Activated naive CD4-positive, alpha-beta T cell treated with anti-CD3 and anti-CD28 coated beads for 36 hours (primary cell): ENCODE measurements at regions of chr5 and their contacts with region 1.

Region 1: GRCh38 chr5:10441083-10441991 is at the start of gene ROPN1L:
- DNase-seq: peak; percentile 74
- H3K4me3 Mint-ChIP-seq: peak within 1 kb of the TSS; percentile 74
- H3K27ac Mint-ChIP-seq: no peak within 1 kb of the TSS
- H3K4me1 Mint-ChIP-seq: peaks cover 32% of the 10 kb centered on the region
- H3K27me3 Mint-ChIP-seq: peaks cover 2% of the 10 kb centered on the region
- total RNA-seq, gene ROPN1L: not detected

Region 2: DNA sequence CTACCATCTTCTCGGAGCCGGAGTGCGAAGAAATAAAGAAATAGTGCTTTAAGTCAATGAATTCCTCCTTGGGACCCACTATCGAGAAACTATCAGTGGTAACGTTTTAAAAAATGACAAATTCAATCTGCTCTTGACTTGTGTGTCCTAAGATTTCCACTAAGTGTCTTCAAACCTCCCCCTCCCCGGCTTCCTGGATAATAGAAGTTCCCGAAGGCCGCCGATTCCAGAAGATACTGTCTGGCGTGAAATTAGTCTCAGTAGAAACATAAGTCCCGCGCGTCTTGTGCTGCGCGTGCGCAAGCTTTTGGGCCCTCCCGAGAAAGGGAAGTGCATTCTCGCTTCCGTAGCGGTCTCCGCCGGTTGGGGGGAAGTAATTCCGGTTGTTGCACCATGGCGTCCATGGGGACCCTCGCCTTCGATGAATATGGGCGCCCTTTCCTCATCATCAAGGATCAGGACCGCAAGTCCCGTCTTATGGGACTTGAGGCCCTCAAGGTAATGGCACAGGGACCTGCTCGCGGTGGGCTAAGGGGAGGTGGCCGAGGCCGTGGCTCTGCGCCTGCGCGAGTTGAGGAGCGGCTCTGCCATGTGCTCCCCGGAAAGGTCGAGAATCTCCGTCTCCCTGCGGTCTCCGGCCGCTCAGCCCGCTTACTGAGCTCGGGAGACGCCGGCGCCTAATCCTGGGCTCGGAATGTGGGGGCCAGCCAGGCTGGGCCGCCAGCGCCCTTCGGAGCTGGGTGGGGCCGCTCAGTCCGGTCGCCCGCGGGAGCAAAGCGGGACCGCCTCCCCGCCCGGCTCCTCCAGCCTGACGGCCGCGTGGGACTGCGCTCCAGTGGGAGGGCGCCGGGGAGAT is 191.2 kb before region 1 on chr5 and contains the start of gene CCT5:
- CTCF ChIA-PET with region 1: no interaction called
- intact Hi-C with region 1: loop called (anchors 1 kb)
- DNase-seq: peak; percentile 93
- H3K4me3 Mint-ChIP-seq: peak within 1 kb of the TSS; percentile 86
- H3K27ac Mint-ChIP-seq: peak within 1 kb of the TSS; percentile 99
- H3K4me1 Mint-ChIP-seq: peaks cover 47% of the 10 kb centered on the region
- H3K27me3 Mint-ChIP-seq: no peaks in the 10 kb centered on the region
- total RNA-seq, gene CCT5: 414 to 419 TPM

Region 3: GRCh38 chr5:10353241-10354047 is 87.9 kb before region 1 on chr5 and contains the start of gene MARCHF6:
- CTCF ChIA-PET with region 1: no interaction called
- intact Hi-C with region 1: loop called (anchors 1 kb)
- DNase-seq: peak; percentile 96
- H3K4me3 Mint-ChIP-seq: peak within 1 kb of the TSS; percentile 99
- H3K27ac Mint-ChIP-seq: peak within 1 kb of the TSS; percentile 98
- H3K4me1 Mint-ChIP-seq: peaks cover 39% of the 10 kb centered on the region
- H3K27me3 Mint-ChIP-seq: no peaks in the 10 kb centered on the region
- total RNA-seq, gene MARCHF6: 72.5 to 76.8 TPM

Region 4: GRCh38 chr5:10452768-10453331 is 11.5 kb after region 1 on chr5:
- CTCF ChIA-PET with region 1: interaction called, 19 read pairs
- intact Hi-C with region 1: no loop called
- DNase-seq: peak; percentile 22
- H3K4me3 Mint-ChIP-seq: no peak overlapping the region
- H3K27ac Mint-ChIP-seq: no peak overlapping the region
- H3K4me1 Mint-ChIP-seq: peaks cover 1% of the 10 kb centered on the region
- H3K27me3 Mint-ChIP-seq: no peaks in the 10 kb centered on the region

Region 5: DNA sequence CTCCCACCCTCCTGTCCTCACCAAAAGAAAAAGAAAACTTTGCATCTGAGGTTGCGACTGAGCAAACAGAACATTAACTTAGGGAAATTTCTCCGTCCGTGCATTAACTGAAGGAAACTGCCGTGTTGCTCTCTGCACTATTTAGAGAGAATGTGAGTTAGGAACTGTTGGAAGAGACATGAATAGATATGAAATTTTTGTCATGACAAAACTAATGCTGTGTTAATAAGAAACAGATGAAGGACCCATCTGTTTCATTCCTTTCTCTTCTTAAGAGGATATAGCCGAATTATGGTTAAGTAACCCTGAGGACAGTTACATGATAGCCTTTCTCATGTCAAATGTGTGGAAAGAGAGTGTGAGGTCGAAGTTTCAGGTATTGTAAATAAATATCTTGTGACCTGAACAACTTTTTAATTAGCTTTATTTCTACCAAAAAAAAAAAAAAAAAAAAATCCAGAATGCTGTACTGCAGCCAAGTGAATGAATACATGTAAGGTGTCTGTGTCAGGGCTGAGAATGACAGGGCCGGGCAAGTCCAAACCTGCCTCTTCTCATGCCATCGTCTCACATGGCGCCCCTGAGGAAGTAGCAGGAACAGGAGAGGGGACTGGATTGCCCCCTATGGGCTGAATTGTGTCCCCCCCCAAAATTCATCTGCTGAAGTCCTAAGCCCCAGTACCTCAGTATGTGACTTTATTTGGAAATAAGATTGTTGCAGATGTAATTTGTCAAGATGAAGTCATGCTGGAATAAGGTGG is 86.9 kb after region 1 on chr5:
- CTCF ChIA-PET with region 1: no interaction called
- intact Hi-C with region 1: no loop called
- DNase-seq: no peak
- H3K4me3 Mint-ChIP-seq: no peak overlapping the region
- H3K27ac Mint-ChIP-seq: no peak overlapping the region
- H3K4me1 Mint-ChIP-seq: peaks cover 2% of the 10 kb centered on the region
- H3K27me3 Mint-ChIP-seq: peaks cover 10% of the 10 kb centered on the region

Region 6: GRCh38 chr5:10627160-10627701 is 185.9 kb after region 1 on chr5:
- CTCF ChIA-PET with region 1: interaction called, 11 read pairs
- intact Hi-C with region 1: loop called (anchors 5 kb)
- DNase-seq: peak; percentile 38
- H3K4me3 Mint-ChIP-seq: peak overlapping the region; percentile 76
- H3K27ac Mint-ChIP-seq: no peak overlapping the region
- H3K4me1 Mint-ChIP-seq: peaks cover 26% of the 10 kb centered on the region
- H3K27me3 Mint-ChIP-seq: peaks cover 6% of the 10 kb centered on the region

Region 7: DNA sequence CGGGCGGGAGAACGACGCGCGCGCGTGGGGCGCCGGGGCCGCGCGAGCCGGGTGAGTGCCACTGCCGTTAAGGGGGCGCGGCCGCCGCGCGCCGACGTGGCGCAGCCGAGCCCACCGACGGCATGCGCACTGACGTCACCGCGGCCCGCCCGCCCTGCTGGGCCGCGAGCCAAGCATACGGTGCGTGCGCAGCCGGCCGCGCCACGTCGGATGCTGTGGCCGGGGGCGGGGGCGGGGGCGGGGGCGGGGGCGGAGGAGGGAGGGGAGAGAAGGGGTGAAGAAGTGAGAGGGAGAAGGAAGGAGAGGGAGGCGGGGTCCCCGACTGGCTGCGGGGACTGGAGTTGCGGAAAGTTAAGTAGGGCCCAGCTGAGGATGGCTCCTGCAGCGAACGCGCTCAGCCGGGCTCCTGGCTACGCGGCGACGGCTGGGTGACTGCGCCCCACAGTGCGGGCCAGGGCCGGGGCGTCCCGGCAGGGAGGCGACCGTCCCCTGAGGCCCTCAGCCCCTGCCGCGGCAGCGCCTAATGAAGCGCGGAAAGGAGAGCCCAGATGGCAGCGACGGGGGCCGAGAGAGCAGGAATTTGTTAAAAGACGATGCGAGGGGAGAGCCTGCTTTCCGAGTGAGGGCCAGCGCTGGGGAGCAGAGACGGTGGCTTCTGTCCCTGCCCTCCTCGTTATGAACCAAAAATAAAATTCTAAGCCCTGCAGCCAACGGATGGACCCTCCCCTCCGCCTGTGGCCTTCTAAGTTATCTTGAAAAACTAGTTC is 320.0 kb after region 1 on chr5 and contains the start of gene DAP:
- CTCF ChIA-PET with region 1: no interaction called
- intact Hi-C with region 1: loop called (anchors 2 kb)
- DNase-seq: peak; percentile 78
- H3K4me3 Mint-ChIP-seq: peak within 1 kb of the TSS; percentile 84
- H3K27ac Mint-ChIP-seq: peak within 1 kb of the TSS; percentile 83
- H3K4me1 Mint-ChIP-seq: peaks cover 41% of the 10 kb centered on the region
- H3K27me3 Mint-ChIP-seq: peaks cover 3% of the 10 kb centered on the region
- total RNA-seq, gene DAP: 29.5 to 29.7 TPM